Dendritic cell treated with granulocyte-macrophage colony-stimulating factor and Interleukin-4, amounts not matched to agents 40 ng/mL and 50 ng/mL, for 4 days (primary cell): ENCODE measurements at regions of chr11 and their contacts with region 1.

Region 1: GRCh38 chr11:44950625-44951476 is at the start of gene TP53I11:
- H3K4me3 Mint-ChIP-seq: peak within 1 kb of the TSS; percentile 83
- H3K27ac Mint-ChIP-seq: peak within 1 kb of the TSS; percentile 74
- H3K4me1 Mint-ChIP-seq: peaks cover 53% of the 10 kb centered on the region
- H3K27me3 Mint-ChIP-seq: peaks cover 15% of the 10 kb centered on the region

Region 2: DNA sequence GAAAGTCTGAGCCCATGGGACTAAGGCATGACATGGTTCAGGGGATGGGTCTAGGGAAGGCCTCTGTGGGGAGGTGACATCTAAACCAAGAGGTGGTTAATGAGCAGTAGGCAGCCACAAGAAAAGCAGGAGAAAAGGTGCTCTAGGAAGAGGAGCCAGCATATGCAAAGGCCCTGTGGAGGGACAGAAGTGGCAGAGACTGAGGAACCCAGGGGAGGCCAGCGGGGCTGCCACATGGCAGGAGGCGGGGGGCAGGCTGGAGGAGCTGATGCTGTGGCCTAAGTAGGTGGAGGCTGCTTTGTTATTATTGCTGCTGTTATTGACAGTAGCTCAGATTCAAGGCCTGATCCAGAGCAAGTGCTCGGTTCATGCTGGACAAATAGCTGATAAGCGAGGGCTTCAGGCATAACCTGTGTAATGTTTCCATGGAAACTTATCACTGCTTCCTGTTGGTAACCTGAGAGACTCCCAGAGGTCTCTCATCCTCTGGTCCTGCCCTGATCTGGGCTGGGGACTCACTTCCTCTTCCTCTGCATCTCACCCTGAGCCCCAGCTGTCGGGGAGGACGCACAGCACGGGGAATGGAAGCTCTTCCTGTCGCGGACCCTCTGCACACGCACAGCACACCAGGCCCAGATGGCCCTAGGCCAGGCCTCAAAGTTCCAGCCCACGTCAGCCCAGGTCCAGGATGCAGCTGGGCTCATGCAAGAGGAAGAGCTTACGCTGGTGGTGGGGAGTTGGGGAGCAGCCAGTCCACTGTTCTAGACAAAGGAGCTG is 75.1 kb after region 1 on chr11:
- intact Hi-C with region 1: loop called (anchors 10 kb)
- H3K4me3 Mint-ChIP-seq: no peak overlapping the region
- H3K27ac Mint-ChIP-seq: no peak overlapping the region
- H3K4me1 Mint-ChIP-seq: peaks cover 36% of the 10 kb centered on the region
- H3K27me3 Mint-ChIP-seq: peaks cover 18% of the 10 kb centered on the region

Region 3: DNA sequence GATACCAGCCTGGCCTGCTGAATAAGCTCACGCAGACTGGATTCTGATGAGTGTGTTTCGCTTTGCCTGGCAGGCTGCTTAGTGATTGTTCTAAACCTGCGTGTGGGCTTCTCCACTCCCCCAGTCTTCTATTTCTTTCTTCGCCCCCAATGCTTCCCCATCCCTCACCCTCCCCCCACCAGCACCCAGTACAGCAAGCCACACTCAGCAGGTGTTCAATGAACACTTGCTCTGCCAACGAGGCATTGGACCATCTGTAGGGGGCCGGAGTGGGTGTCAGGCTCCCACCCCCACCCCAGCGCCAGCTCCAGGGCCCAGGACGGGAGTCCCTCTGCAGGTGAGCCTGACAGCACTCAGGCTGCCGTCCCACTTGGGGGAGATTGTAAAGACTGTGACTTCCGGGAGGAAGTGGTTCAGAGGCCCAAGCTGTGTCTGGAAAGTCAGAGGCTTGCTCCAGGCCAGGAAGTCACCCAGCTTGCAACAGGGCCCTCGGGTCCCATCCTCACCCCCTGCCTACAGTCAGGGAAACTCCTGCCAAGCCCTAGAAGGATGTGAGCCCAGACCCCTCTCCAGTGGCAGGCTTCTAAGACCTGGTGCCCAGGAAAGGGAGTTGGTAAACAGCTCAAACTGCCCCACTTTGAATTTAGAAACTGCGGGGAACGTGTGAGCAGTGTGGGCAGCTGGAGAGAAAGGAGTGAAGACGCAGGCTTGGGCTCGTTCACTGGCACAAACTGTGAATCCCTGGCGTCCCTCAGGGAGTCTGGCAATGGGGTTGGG is 129.3 kb after region 1 on chr11:
- intact Hi-C with region 1: loop called (anchors 5 kb)
- H3K4me3 Mint-ChIP-seq: no peak overlapping the region
- H3K27ac Mint-ChIP-seq: peak overlapping the region; percentile 87
- H3K4me1 Mint-ChIP-seq: peaks cover 56% of the 10 kb centered on the region
- H3K27me3 Mint-ChIP-seq: no peaks in the 10 kb centered on the region